Activated CD8-positive, alpha-beta memory T cell treated with anti-CD3 and anti-CD28 coated beads, Interleukin-2, amount 10 ng/mL, durations not matched to agents 7 days and 5 days (primary cell): ENCODE measurements at regions of chr19 and their contacts with region 1.

Region 1: GRCh38 chr19:56252699-56253422 is 19.7 kb upstream of the EDDM13 start:
- DNase-seq: peak; percentile 83
- ATAC-seq: peak; percentile 72
- H3K4me3 Mint-ChIP-seq: no peak overlapping the region
- H3K27ac Mint-ChIP-seq: no peak overlapping the region
- H3K4me1 Mint-ChIP-seq: no peaks in the 10 kb centered on the region
- H3K27me3 Mint-ChIP-seq: no peaks in the 10 kb centered on the region

Region 2: DNA sequence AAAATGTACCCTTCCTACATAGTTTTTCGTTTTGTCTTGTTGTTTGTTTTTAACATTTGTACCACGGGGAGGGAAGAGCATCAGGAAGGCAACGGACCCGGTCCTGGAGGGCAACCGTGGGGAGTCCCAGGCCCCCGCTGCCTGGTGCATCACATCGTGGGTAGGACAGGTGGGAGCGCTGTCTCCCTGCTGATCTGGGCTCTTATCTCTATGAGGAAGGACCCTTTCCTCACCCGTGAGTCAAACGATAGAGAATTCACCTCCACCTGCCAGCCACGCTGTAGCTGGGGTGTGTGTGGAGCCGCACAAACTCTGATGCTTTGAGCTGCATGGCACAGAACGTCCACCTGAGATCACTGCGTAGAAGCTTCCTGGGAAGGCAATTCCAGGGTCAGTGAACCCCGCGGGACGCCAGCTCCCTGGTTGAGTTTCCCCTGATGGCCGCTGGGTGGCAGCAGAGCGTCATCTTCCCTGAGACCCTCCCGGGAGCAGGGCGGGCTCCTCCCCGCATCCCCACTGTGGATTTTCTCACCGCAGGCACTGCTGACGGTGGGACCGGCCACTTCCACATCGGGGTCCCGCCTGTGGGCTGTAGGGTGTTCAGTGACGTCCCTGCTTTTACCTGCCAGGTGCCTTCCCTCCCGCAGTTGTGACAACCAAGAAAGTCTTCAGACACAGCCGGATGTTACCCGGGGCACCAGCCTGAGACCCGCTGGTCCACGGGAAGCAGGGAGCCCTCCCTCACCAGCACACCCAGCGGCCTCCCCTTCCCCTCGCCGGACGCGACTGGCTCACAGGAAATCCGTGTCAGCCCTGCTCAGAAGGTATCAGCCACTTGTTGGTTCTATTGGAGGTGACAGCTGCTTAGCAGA is 186.5 kb before region 1 on chr19:
- CTCF ChIA-PET with region 1: interaction called, 35 read pairs
- DNase-seq: peak; percentile 70
- ATAC-seq: peak; percentile 81
- H3K4me3 Mint-ChIP-seq: peak overlapping the region; percentile 41
- H3K27ac Mint-ChIP-seq: no peak overlapping the region
- H3K4me1 Mint-ChIP-seq: peaks cover 16% of the 10 kb centered on the region
- H3K27me3 Mint-ChIP-seq: peaks cover 16% of the 10 kb centered on the region

Region 3: DNA sequence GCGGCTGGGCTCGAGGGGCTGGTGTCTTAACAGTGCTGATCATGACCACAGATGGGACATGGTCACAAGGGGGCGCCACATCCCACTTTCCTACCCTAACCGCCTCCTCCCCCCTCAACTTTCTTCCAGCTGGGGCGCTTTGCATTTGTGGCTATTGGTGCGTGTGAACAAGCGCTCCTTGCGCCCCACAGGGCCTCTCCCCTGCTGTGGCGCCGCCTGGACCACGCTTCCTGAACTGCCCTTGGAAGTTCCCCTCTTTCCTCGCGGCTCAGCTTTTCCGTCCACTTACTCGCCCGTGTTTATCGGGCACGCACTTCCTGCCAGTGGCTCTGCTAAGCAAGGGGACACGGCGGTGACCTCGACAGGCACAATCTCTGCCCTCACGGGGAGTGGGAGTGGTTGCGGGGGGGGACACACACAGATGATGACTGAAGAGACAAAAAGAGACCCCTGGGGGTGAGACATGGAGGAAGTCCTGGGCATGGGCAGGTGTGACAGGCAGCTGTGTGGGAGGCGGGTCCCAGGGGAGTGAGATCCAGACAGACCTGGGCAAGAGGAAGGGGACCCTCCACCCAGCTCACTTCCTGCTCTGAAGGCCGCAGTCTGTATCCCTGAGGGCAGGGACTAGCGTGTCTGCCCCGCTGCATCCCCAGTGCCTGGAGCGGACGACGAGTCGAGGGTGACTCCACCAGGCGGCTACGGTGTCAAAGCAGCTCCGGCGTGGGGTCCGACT is 172.0 kb before region 1 on chr19:
- CTCF ChIA-PET with region 1: interaction called, 21 read pairs
- DNase-seq: peak; percentile 77
- ATAC-seq: peak; percentile 70
- H3K4me3 Mint-ChIP-seq: peak overlapping the region; percentile 64
- H3K27ac Mint-ChIP-seq: peak overlapping the region; percentile 25
- H3K4me1 Mint-ChIP-seq: peaks cover 9% of the 10 kb centered on the region
- H3K27me3 Mint-ChIP-seq: peaks cover 8% of the 10 kb centered on the region

Region 4: DNA sequence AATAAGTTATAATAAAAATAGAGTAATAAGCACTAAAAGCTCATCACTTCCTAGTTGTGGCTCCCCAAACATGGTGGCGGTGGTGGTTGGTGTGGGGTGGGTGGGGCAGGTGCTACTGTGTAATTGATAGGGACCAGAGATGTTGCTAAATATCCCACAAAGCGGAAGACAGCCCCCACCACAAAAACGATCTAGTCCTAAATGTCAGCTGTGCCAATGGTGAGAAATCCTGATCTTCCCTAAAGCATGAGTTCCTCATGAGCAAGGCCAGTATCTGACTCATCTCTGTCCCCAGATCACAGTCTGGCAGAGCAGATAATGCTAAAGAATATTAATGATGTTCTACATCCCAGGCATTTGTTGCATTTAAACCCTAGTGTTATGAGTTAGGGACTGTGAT is 17.8 kb after region 1 on chr19:
- CTCF ChIA-PET with region 1: interaction called, 26 read pairs
- DNase-seq: no peak
- ATAC-seq: no peak
- H3K4me3 Mint-ChIP-seq: no peak overlapping the region
- H3K27ac Mint-ChIP-seq: no peak overlapping the region
- H3K4me1 Mint-ChIP-seq: no peaks in the 10 kb centered on the region
- H3K27me3 Mint-ChIP-seq: no peaks in the 10 kb centered on the region

Region 5: GRCh38 chr19:56314562-56315077 is 61.8 kb after region 1 on chr19 and contains the start of gene ZSCAN5A:
- CTCF ChIA-PET with region 1: interaction called, 18 read pairs
- DNase-seq: peak; percentile 97
- ATAC-seq: peak; percentile 84
- H3K4me3 Mint-ChIP-seq: peak within 1 kb of the TSS; percentile 89
- H3K27ac Mint-ChIP-seq: peak within 1 kb of the TSS; percentile 99
- H3K4me1 Mint-ChIP-seq: peaks cover 28% of the 10 kb centered on the region
- H3K27me3 Mint-ChIP-seq: no peaks in the 10 kb centered on the region
- total RNA-seq, gene ZSCAN5A: 5.9 to 8.6 TPM

Region 6: GRCh38 chr19:56333505-56333904 is 80.6 kb after region 1 on chr19:
- CTCF ChIA-PET with region 1: interaction called, 91 read pairs
- DNase-seq: peak; percentile 61
- ATAC-seq: peak; percentile 61
- H3K4me3 Mint-ChIP-seq: no peak overlapping the region
- H3K27ac Mint-ChIP-seq: no peak overlapping the region
- H3K4me1 Mint-ChIP-seq: no peaks in the 10 kb centered on the region
- H3K27me3 Mint-ChIP-seq: peaks cover 10% of the 10 kb centered on the region

Region 7: GRCh38 chr19:56350416-56351045 is 97.7 kb after region 1 on chr19:
- CTCF ChIA-PET with region 1: interaction called, 39 read pairs
- DNase-seq: peak; percentile 67
- ATAC-seq: no peak
- H3K4me3 Mint-ChIP-seq: no peak overlapping the region
- H3K27ac Mint-ChIP-seq: no peak overlapping the region
- H3K4me1 Mint-ChIP-seq: no peaks in the 10 kb centered on the region
- H3K27me3 Mint-ChIP-seq: no peaks in the 10 kb centered on the region

Region 8: DNA sequence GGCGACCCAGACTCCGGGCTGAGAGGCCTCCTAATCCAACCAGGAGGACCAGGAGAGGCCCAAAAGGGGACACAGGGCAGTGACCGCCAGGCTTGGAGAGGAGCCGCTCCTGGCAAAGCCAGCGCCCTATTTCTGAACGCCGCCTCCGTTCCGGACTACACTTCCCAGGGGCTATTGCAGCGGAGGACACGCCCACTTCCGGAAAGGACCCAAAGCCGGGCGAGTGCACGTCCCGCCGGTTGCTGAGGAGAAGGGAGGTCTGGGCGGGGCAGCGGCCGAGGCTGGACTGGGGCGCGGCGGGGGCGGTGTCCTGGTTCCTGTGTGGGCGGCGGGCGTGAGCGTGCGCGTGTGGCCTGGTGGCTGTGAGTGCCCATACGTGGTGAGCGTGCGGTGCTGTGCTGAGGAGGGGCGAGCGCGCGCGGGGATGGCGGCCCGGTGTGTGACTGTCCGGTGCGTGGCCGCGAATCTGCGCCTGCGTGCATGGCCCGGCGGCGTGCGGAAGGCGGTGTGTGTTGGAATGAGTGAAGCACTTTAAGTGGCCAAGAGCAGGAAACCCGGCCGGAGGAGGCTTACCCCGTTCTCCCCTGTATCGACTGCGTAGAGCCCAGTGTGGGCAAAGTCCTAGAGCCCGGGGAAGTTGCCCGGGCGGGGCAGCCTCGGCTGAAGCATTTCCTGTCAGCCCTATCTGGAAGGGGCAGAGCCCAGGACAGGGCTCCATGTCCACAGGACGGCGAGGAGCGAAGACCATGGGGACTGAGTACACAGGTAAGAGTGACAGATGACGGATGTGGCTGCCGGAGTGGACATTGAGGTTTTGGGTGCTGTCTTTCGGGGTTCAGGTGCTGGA is 314.6 kb after region 1 on chr19 and contains the start of gene ZNF470:
- CTCF ChIA-PET with region 1: no interaction called
- DNase-seq: peak; percentile 95
- ATAC-seq: peak; percentile 98
- H3K4me3 Mint-ChIP-seq: peak within 1 kb of the TSS; percentile 93
- H3K27ac Mint-ChIP-seq: peak within 1 kb of the TSS; percentile 87
- H3K4me1 Mint-ChIP-seq: peaks cover 15% of the 10 kb centered on the region
- H3K27me3 Mint-ChIP-seq: no peaks in the 10 kb centered on the region
- total RNA-seq, gene ZNF470: 4.0 TPM